ENCODE measurements at regions of chr11 and their contacts with region 1.

Region 1: GRCh38 chr11:28842716-28843115 is 734.5 kb downstream of the METTL15 start:
- DNase-seq: no peak
- ATAC-seq: no peak
- H3K4me3 ChIP-seq: no peak overlapping the region
- H3K27ac ChIP-seq: no peak overlapping the region
- H3K4me1 ChIP-seq: no peaks in the 10 kb centered on the region
- H3K27me3 ChIP-seq: no peaks in the 10 kb centered on the region

Region 2: DNA sequence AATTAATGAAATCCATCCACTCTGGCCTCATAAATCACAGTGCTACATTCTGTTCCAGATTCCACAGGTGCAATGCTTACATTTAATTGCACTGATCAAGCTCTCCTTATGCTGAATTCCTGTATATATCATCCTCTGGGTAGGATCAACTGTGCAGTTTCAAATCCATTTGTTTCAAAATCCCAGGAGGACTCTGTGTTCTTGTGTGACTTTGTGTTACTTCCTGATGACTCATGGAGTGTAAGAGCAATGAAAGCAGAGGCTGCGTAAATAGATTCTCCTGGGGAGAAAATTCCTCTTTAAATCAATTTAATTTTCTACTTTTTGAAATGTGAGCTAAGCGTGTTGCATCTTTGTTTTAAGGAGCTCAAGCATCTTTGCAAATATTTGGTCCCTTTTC is 18.2 kb after region 1 on chr11:
- intact Hi-C with region 1: loop called in 1 of 2 experiments (anchors 1 kb)
- DNase-seq: no peak
- ATAC-seq: no peak
- H3K4me3 ChIP-seq: no peak overlapping the region
- H3K27ac ChIP-seq: no peak overlapping the region
- H3K4me1 ChIP-seq: no peaks in the 10 kb centered on the region
- H3K27me3 ChIP-seq: no peaks in the 10 kb centered on the region

Region 3: GRCh38 chr11:29040491-29040890 is 197.8 kb after region 1 on chr11:
- intact Hi-C with region 1: no loop called
- DNase-seq: no peak
- ATAC-seq: no peak
- H3K4me3 ChIP-seq: no peak overlapping the region
- H3K27ac ChIP-seq: no peak overlapping the region
- H3K4me1 ChIP-seq: no peaks in the 10 kb centered on the region
- H3K27me3 ChIP-seq: no peaks in the 10 kb centered on the region

Measured in aorta (tissue), 5 donors.